ENCODE measurements at regions of chr1 and their contacts with region 1.

Region 1: GRCh38 chr1:58528518-58528917 is 18.0 kb downstream of the OMA1 start:
- DNase-seq: peak; percentile 45
- H3K27ac ChIP-seq: no peak overlapping the region
- CTCF ChIP-seq: no peak

Region 2: GRCh38 chr1:58460469-58460868 is 68.0 kb before region 1 on chr1:
- CTCF ChIA-PET with region 1: no interaction called
- POLR2A ChIA-PET with region 1: no interaction called
- DNase-seq: peak; percentile 8
- H3K27ac ChIP-seq: no peak overlapping the region
- CTCF ChIP-seq: no peak

Region 3: GRCh38 chr1:58477390-58477789 is 51.1 kb before region 1 on chr1:
- CTCF ChIA-PET with region 1: interaction called, 10 read pairs
- POLR2A ChIA-PET with region 1: no interaction called
- DNase-seq: no peak
- H3K27ac ChIP-seq: no peak overlapping the region
- CTCF ChIP-seq: no peak

Region 4: GRCh38 chr1:58570817-58571216 is 42.3 kb after region 1 on chr1:
- CTCF ChIA-PET with region 1: no interaction called
- POLR2A ChIA-PET with region 1: no interaction called
- DNase-seq: no peak
- H3K27ac ChIP-seq: no peak overlapping the region
- CTCF ChIP-seq: no peak

Region 5: GRCh38 chr1:58664881-58665280 is 136.4 kb after region 1 on chr1:
- CTCF ChIA-PET with region 1: no interaction called
- POLR2A ChIA-PET with region 1: no interaction called
- DNase-seq: no peak
- H3K27ac ChIP-seq: no peak overlapping the region
- CTCF ChIP-seq: no peak